MCF 10A (cell line): ENCODE measurements at regions of chr10 and their contacts with region 1.

Region 1: DNA sequence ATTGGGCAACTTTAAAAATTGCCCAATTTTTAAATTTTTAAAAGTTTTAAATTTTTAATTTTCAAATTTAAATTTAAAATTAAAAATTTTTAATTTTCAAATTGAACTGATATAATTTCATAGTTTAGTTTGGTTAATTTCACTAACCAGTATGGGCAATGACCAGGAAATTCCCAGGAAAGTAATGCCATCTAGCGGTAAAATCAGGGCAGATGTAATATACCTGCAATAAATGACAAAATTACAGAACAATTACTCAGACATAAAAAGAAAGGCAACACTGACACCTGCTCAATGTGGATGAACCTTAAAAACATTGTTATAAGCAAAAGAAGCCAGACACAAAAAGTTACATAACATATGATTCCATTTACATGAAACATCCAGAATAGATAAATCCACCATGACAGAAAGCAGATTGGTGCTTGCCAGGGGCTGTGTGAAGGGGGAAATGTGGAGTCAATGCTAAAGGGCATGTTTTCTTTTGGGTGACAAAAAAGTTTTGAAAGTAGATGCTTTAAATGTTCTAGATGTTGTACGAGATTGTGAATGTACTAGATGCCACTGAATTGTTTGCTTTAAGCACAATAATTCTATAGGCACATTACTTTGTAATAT is 28.6 kb upstream of the SLC16A12 start:
- DNase-seq: peak; percentile 62
- H3K4me3 Mint-ChIP-seq: no peak overlapping the region
- H3K27ac Mint-ChIP-seq: peak overlapping the region; percentile 17
- H3K4me1 Mint-ChIP-seq: peaks cover 6% of the 10 kb centered on the region
- H3K27me3 Mint-ChIP-seq: no peaks in the 10 kb centered on the region
- CTCF ChIP-seq: peak; percentile 71

Region 2: GRCh38 chr10:89426230-89426868 is 137.6 kb before region 1 on chr10:
- CTCF ChIA-PET with region 1: interaction called, 32 read pairs
- POLR2A ChIA-PET with region 1: interaction called, 3 read pairs
- intact Hi-C with region 1: loop called (anchors 1 kb)
- DNase-seq: peak; percentile 70
- H3K4me3 Mint-ChIP-seq: no peak overlapping the region
- H3K27ac Mint-ChIP-seq: no peak overlapping the region
- H3K4me1 Mint-ChIP-seq: peaks cover 26% of the 10 kb centered on the region
- H3K27me3 Mint-ChIP-seq: no peaks in the 10 kb centered on the region
- CTCF ChIP-seq: peak; percentile 74

Region 3: DNA sequence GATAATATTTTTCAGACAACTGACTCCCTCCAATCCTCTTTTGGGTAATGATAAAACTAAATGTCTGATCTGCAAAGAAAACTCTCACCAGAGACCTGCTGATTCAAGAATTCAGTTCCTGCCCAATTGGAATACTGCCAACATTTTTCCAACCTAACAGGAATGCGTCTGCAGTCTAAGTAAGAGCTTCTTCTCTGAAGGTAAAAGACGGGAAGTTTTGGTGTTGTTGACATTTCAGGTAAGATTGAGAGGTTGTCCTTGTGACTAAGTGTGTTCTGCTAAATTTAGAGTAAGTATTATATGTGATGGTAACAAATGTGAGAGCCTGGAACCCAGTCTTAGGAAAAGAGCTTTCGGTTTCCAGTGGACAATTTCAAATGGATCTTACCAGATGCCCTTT is 132.0 kb before region 1 on chr10:
- CTCF ChIA-PET with region 1: interaction called, 32 read pairs
- POLR2A ChIA-PET with region 1: interaction called, 6 read pairs
- intact Hi-C with region 1: no loop called
- DNase-seq: peak; percentile 67
- H3K4me3 Mint-ChIP-seq: peak overlapping the region; percentile 19
- H3K27ac Mint-ChIP-seq: no peak overlapping the region
- H3K4me1 Mint-ChIP-seq: peaks cover 26% of the 10 kb centered on the region
- H3K27me3 Mint-ChIP-seq: no peaks in the 10 kb centered on the region
- CTCF ChIP-seq: no peak

Region 4: GRCh38 chr10:89466599-89467035 is 97.4 kb before region 1 on chr10:
- CTCF ChIA-PET with region 1: interaction called, 65 read pairs
- POLR2A ChIA-PET with region 1: interaction called, 18 read pairs
- intact Hi-C with region 1: loop called (anchors 1 kb)
- DNase-seq: peak; percentile 77
- H3K4me3 Mint-ChIP-seq: no peak overlapping the region
- H3K27ac Mint-ChIP-seq: peak overlapping the region; percentile 68
- H3K4me1 Mint-ChIP-seq: peaks cover 37% of the 10 kb centered on the region
- H3K27me3 Mint-ChIP-seq: no peaks in the 10 kb centered on the region
- CTCF ChIP-seq: peak; percentile 43

Region 5: DNA sequence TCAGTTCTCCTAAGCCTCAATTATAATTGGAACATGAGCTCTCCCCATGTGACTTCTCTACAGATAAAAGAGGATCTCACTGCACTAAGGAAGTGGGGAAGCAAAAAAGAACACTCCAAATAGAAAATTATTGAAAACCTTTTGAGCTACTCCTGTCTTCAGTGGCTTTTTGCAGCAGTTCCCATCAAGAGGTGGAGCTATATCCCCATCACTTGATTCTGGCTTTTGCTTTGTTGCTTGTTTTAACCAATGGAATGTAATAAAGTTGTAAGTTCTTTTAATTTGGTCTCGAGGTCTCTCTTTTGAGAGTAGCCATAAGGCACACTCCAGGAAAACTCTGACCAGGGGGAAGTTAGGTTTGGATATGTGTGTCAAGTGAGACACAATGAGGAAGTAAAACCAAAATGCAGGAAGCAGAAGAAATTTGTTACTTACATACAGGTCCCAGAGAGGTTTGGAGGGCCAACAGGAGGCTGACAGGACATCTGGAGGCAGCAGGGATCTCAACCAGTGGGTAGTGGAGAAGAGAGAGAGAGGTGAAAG is 724.5 kb after region 1 on chr10:
- CTCF ChIA-PET with region 1: no interaction called
- POLR2A ChIA-PET with region 1: no interaction called
- intact Hi-C with region 1: no loop called
- DNase-seq: peak; percentile 42
- H3K4me3 Mint-ChIP-seq: no peak overlapping the region
- H3K27ac Mint-ChIP-seq: no peak overlapping the region
- H3K4me1 Mint-ChIP-seq: peaks cover 25% of the 10 kb centered on the region
- H3K27me3 Mint-ChIP-seq: no peaks in the 10 kb centered on the region
- CTCF ChIP-seq: peak; percentile 31